IMR-90 (cell line): ENCODE measurements at regions of chr10 and their contacts with region 1.

Region 1: DNA sequence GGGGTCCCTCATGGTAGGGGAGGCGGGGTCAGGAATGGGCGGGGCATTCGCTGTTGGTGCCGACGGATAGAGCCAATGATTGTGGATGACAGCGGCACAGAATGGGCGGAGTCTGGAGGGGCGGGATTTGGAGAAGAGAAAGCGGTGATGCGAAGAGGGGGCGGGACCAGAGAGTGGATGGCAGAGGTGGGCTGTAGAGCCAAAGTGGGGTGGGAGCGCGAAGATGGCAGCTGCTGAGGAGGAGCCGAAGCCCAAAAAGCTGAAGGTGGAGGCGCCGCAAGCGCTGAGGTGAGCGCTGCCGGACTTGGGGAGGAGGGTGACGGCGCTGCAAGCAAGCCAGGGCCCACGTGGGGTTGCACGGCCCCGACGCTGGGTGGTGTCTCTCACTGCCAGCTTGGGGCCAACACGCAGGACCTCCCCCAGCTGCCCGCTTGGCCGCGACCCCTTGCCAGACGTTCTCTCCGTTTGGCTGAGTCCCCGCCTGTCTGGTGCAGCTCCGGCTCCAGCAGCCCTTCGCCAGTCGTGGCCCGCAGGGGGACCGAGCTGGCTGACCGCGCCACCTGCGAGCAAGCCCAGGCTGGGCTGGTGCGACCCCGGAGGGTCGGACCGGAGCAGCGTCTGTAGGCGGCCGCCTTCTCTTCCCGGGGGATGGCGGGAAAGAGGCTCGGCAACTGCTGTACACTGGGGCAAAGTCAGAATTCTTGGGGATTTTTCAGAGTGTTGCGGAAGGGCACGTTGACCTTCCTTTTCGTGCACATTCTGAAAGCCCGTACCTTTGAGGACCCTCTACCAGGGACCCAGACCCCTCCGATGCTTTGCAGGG is at the start of gene ADK:
- DNase-seq: peak; percentile 96
- ATAC-seq: peak; percentile 98
- H3K4me3 ChIP-seq: peak within 1 kb of the TSS; percentile 74
- H3K27ac ChIP-seq: peak within 1 kb of the TSS; percentile 71
- H3K4me1 ChIP-seq: no peaks in the 10 kb centered on the region; the same call in 1 of the 2 replicates
- H3K27me3 ChIP-seq: no peaks in the 10 kb centered on the region
- CTCF ChIP-seq: 0 out of 2 replicates have a peak, but pooled peaks have one; percentile 17
- POLR2A ChIP-seq: 0 out of 2 replicates have a peak, but pooled peaks have one; percentile 26
- RAD21 ChIP-seq: peak; percentile 18; the same call in 1 of the 2 replicates
- total RNA-seq, gene ADK: 40.9 and 50.8 TPM in 2 replicates

Region 2: GRCh38 chr10:73931767-73932619 is 219.3 kb before region 1 on chr10:
- CTCF ChIA-PET with region 1: no interaction called
- POLR2A ChIA-PET with region 1: interaction called, 10 read pairs
- dilution Hi-C with region 1: no loop called
- in situ Hi-C with region 1: no loop called
- intact Hi-C with region 1: no loop called
- DNase-seq: no peak
- ATAC-seq: no peak
- H3K4me3 ChIP-seq: no peak overlapping the region
- H3K27ac ChIP-seq: no peak overlapping the region
- H3K4me1 ChIP-seq: peaks cover 3% of the 10 kb centered on the region; the same call in 1 of the 2 replicates
- H3K27me3 ChIP-seq: no peaks in the 10 kb centered on the region
- CTCF ChIP-seq: no peak
- POLR2A ChIP-seq: no peak
- RAD21 ChIP-seq: no peak

Region 3: DNA sequence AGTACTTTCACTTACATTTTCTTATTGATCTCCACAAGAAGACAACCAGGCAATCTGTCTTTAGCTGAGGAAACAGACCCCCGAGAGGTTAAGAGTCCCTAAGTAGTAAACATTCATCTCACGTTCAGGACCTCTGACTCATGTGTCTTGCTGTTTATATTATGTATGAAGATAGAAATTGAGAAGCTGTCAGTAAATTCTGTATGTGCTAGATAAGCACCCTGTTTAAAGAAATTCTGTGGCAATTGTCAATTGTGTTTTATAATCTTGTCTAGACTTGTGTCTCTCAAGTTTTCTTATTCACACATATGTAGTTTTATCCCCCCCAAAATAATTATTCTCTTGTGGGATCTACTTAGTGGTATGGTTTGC is 14.2 kb after region 1 on chr10:
- CTCF ChIA-PET with region 1: no interaction called
- POLR2A ChIA-PET with region 1: interaction called, 22 read pairs
- dilution Hi-C with region 1: no loop called
- in situ Hi-C with region 1: no loop called
- intact Hi-C with region 1: no loop called
- DNase-seq: peak; percentile 39
- ATAC-seq: peak; percentile 47
- H3K4me3 ChIP-seq: no peak overlapping the region
- H3K27ac ChIP-seq: no peak overlapping the region
- H3K4me1 ChIP-seq: peaks cover 4% of the 10 kb centered on the region; the same call in 1 of the 2 replicates
- H3K27me3 ChIP-seq: no peaks in the 10 kb centered on the region
- CTCF ChIP-seq: no peak
- POLR2A ChIP-seq: no peak
- RAD21 ChIP-seq: no peak

Region 4: GRCh38 chr10:74189999-74190421 is 38.7 kb after region 1 on chr10:
- CTCF ChIA-PET with region 1: no interaction called
- POLR2A ChIA-PET with region 1: no interaction called
- dilution Hi-C with region 1: no loop called
- in situ Hi-C with region 1: no loop called
- intact Hi-C with region 1: loop called (anchors 5 kb)
- DNase-seq: peak; percentile 93
- ATAC-seq: peak; percentile 92
- H3K4me3 ChIP-seq: peak overlapping the region; percentile 28; the same call in 1 of the 2 replicates
- H3K27ac ChIP-seq: peak overlapping the region; percentile 87
- H3K4me1 ChIP-seq: peaks cover 6% of the 10 kb centered on the region
- H3K27me3 ChIP-seq: no peaks in the 10 kb centered on the region
- CTCF ChIP-seq: no peak
- POLR2A ChIP-seq: no peak; the same call in 1 of the 2 replicates
- RAD21 ChIP-seq: no peak

Region 5: GRCh38 chr10:74213571-74214162 is 62.4 kb after region 1 on chr10:
- CTCF ChIA-PET with region 1: interaction called, 4 read pairs
- POLR2A ChIA-PET with region 1: no interaction called
- dilution Hi-C with region 1: no loop called
- in situ Hi-C with region 1: no loop called
- intact Hi-C with region 1: loop called (anchors 5 kb)
- DNase-seq: peak; percentile 51
- ATAC-seq: peak; percentile 77
- H3K4me3 ChIP-seq: no peak overlapping the region
- H3K27ac ChIP-seq: no peak overlapping the region
- H3K4me1 ChIP-seq: no peaks in the 10 kb centered on the region
- H3K27me3 ChIP-seq: no peaks in the 10 kb centered on the region
- CTCF ChIP-seq: peak; percentile 73
- POLR2A ChIP-seq: no peak
- RAD21 ChIP-seq: peak; percentile 70

Region 6: DNA sequence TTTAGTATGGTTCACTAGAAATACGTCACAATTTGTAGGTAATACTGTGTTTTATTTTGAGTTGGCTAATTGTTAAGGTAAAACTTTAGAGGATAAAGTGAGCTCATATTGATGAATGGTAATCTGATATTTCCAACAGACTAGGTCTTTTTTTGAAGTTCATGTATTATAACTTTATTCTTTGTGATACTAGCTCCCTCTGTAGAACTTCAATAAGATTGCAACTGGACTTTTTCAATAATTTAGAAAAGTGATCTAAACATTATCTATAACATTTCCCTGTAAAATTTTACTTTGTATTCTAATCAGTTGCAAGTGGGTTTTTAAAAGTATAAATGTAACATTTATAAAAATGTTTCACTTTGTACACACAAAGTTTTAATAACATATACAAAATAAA is 83.3 kb after region 1 on chr10:
- CTCF ChIA-PET with region 1: interaction called, 5 read pairs
- POLR2A ChIA-PET with region 1: no interaction called
- dilution Hi-C with region 1: no loop called
- in situ Hi-C with region 1: no loop called
- intact Hi-C with region 1: loop called (anchors 5 kb)
- DNase-seq: peak; percentile 33
- ATAC-seq: peak; percentile 49; the same call in 1 of the 2 replicates
- H3K4me3 ChIP-seq: no peak overlapping the region
- H3K27ac ChIP-seq: no peak overlapping the region
- H3K4me1 ChIP-seq: no peaks in the 10 kb centered on the region
- H3K27me3 ChIP-seq: no peaks in the 10 kb centered on the region
- CTCF ChIP-seq: peak; percentile 56
- POLR2A ChIP-seq: no peak
- RAD21 ChIP-seq: peak; percentile 52